CD4-positive, alpha-beta T cell (primary cell): ENCODE measurements at regions of chr11 and their contacts with region 1.

Region 1: GRCh38 chr11:72222907-72223614 is 1.5 kb upstream of the INPPL1 start:
- DNase-seq: peak; percentile 83 to 97 (median 94)
- ATAC-seq: peak; percentile 76
- H3K4me3 ChIP-seq: peak overlapping the region; percentile 91
- H3K4me3 Mint-ChIP-seq: peak overlapping the region; percentile 98
- H3K27ac ChIP-seq: peak overlapping the region; percentile 71 to 75
- H3K27ac Mint-ChIP-seq: peak overlapping the region; percentile 95
- H3K4me1 ChIP-seq: peaks cover 35% of the 10 kb centered on the region
- H3K4me1 Mint-ChIP-seq: peaks cover 32% of the 10 kb centered on the region
- H3K27me3 ChIP-seq: no peaks in the 10 kb centered on the region
- H3K27me3 Mint-ChIP-seq: no peaks in the 10 kb centered on the region
- CTCF ChIP-seq: peak; percentile 22

Region 2: GRCh38 chr11:71787098-71787823 is 435.8 kb before region 1 on chr11:
- CTCF ChIA-PET with region 1: no interaction called
- POLR2A ChIA-PET with region 1: no interaction called
- intact Hi-C with region 1: loop called in 1 of 2 experiments (anchors 10 kb)
- DNase-seq: peak; percentile 85 to 98 (median 92)
- ATAC-seq: peak; percentile 93
- H3K4me3 ChIP-seq: peak overlapping the region; percentile 85
- H3K4me3 Mint-ChIP-seq: peak overlapping the region; percentile 99
- H3K27ac ChIP-seq: peak overlapping the region; percentile 73 to 98
- H3K27ac Mint-ChIP-seq: peak overlapping the region; percentile 99
- H3K4me1 ChIP-seq: peaks cover 13% of the 10 kb centered on the region
- H3K4me1 Mint-ChIP-seq: peaks cover 18% of the 10 kb centered on the region
- H3K27me3 ChIP-seq: no peaks in the 10 kb centered on the region
- H3K27me3 Mint-ChIP-seq: no peaks in the 10 kb centered on the region
- CTCF ChIP-seq: no peak

Region 3: DNA sequence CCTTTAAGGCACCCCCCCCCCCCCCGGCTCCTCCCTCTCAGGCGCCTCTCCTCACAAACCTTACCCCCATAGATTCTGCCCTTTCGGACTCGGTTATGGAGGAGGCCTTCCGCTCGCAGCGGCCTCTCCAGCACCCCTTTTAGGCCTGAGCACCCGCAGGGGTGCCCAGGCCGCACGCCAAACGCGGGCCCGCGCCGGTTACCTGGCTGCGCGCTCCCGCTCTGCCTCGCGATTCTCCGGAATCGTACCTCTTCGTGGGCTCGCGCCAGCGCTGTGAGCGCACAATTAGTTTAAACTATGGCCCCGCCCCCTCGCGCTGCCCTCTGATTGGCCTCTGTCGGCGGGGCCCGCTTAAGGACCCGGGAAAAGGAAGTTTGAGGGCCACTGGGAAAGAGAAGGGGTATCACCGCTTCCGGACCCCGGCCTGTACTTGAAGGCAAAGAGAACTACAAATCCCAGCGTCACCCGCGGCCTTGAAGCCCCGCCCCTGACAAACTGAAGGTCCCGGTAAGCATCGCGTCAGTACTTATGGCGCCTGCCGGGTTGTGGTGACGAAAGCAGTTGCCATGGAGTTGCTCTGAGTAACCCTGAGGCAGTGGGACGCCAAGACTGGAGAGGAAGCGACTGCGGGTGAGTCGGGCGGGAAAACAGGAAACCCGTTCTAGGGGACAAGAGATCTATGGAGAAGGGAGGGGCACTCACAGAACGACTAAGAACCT is 142.6 kb before region 1 on chr11 and contains the starts of genes LRRC51 and NUMA1:
- CTCF ChIA-PET with region 1: no interaction called
- POLR2A ChIA-PET with region 1: interaction called, 3 read pairs
- intact Hi-C with region 1: loop called in 1 of 2 experiments (anchors 1 kb)
- DNase-seq: peak; percentile 97 to 100 (median 99)
- ATAC-seq: peak; percentile 84
- H3K4me3 ChIP-seq: peak within 1 kb of the TSS; percentile 73
- H3K4me3 Mint-ChIP-seq: peak within 1 kb of the TSS; percentile 95
- H3K27ac ChIP-seq: peak within 1 kb of the TSS; percentile 82 to 93
- H3K27ac Mint-ChIP-seq: peak within 1 kb of the TSS; percentile 92
- H3K4me1 ChIP-seq: peaks cover 31% of the 10 kb centered on the region
- H3K4me1 Mint-ChIP-seq: peaks cover 41% of the 10 kb centered on the region
- H3K27me3 ChIP-seq: no peaks in the 10 kb centered on the region
- H3K27me3 Mint-ChIP-seq: no peaks in the 10 kb centered on the region
- CTCF ChIP-seq: no peak
- total RNA-seq, gene LRRC51: 0.87 to 1.1 TPM
- total RNA-seq, gene NUMA1: 191 to 197 TPM

Region 4: DNA sequence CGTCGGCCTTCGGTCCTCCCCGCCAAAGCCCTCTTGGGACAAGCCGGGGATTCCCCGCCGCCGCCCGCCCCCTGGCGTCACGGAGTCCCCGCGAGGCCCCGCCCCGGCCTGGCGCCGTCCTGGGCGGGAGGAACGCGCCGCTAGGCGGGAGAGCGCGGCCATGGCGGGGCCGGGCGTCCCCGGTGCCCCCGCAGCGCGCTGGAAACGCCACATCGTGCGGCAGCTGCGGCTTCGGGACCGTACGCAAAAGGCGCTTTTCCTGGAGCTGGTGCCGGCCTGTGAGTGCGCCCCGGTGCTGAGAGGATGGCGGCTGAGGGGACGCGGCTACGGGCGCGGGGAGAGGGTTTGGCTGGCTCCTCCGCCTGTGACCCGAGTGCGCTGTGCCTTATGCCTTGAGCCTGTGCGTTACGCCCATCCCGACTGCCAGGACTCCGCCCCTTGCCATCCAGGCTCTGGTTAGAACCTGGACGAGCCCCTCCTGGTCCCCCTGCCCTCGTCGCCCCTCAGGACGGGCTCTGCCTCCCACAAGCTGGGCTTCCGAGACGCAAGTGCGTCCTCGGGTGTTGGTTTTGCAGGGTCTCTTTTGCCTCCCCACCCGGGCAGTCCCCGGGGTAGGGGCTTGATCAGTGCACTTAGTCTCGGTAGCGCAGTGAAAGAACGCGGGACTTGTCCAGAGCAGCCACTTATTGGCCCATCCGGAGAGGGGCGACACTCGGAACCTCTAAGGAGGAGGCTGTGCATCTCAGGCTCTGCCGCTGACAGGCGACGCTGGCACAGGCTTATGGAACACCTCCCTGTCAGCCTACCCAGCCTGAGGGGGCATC is 591.4 kb after region 1 on chr11 and contains the start of gene ATG16L2:
- CTCF ChIA-PET with region 1: no interaction called
- POLR2A ChIA-PET with region 1: no interaction called
- intact Hi-C with region 1: loop called in 1 of 2 experiments (anchors 10 kb)
- DNase-seq: peak in 13 of 14 experiments; percentile 78 to 95 (median 87)
- ATAC-seq: peak; percentile 81
- H3K4me3 ChIP-seq: peak within 1 kb of the TSS; percentile 96
- H3K4me3 Mint-ChIP-seq: peak within 1 kb of the TSS; percentile 99
- H3K27ac ChIP-seq: peak within 1 kb of the TSS; percentile 97 to 100
- H3K27ac Mint-ChIP-seq: peak within 1 kb of the TSS; percentile 97
- H3K4me1 ChIP-seq: peaks cover 38% of the 10 kb centered on the region
- H3K4me1 Mint-ChIP-seq: peaks cover 57% of the 10 kb centered on the region
- H3K27me3 ChIP-seq: no peaks in the 10 kb centered on the region
- H3K27me3 Mint-ChIP-seq: no peaks in the 10 kb centered on the region
- CTCF ChIP-seq: peak; percentile 29
- total RNA-seq, gene ATG16L2: 58.3 to 61.6 TPM

Region 5: GRCh38 chr11:73647459-73648100 is 1424.5 kb after region 1 on chr11:
- CTCF ChIA-PET with region 1: no interaction called
- POLR2A ChIA-PET with region 1: interaction called, 3 read pairs
- intact Hi-C with region 1: loop called in 1 of 2 experiments (anchors 10 kb)
- DNase-seq: peak; percentile 90 to 97 (median 94)
- ATAC-seq: peak; percentile 96
- H3K4me3 ChIP-seq: peak overlapping the region; percentile 55
- H3K4me3 Mint-ChIP-seq: peak overlapping the region; percentile 90
- H3K27ac ChIP-seq: peak overlapping the region in 1 of 2 donors; percentile 34
- H3K27ac Mint-ChIP-seq: peak overlapping the region; percentile 91
- H3K4me1 ChIP-seq: peaks cover 25% of the 10 kb centered on the region
- H3K4me1 Mint-ChIP-seq: peaks cover 28% of the 10 kb centered on the region
- H3K27me3 ChIP-seq: no peaks in the 10 kb centered on the region
- H3K27me3 Mint-ChIP-seq: no peaks in the 10 kb centered on the region
- CTCF ChIP-seq: no peak